Heart right ventricle (tissue), 16 donors: ENCODE measurements at regions of chr14 and their contacts with region 1.

Region 1: GRCh38 chr14:24411443-24412389 is 12.9 kb downstream of the NYNRIN start:
- DNase-seq: no peak
- ATAC-seq: peak in 4 of 8 donors; percentile 23 to 45 (median 34)
- H3K4me3 ChIP-seq: no peak overlapping the region
- H3K27ac ChIP-seq: no peak overlapping the region
- H3K4me1 ChIP-seq: peaks cover 0 to 9% (median 0%) of the 10 kb centered on the region in 9 donors
- H3K27me3 ChIP-seq: no peaks in the 10 kb centered on the region
- CTCF ChIP-seq: peak; percentile 19 to 74 (median 63)

Region 2: GRCh38 chr14:24271134-24271833 is 140.4 kb before region 1 on chr14 and contains the start of gene RABGGTA:
- intact Hi-C with region 1: no loop called
- DNase-seq: peak; percentile 86 to 87
- ATAC-seq: peak; percentile 95 to 98 (median 96)
- H3K4me3 ChIP-seq: peak within 1 kb of the TSS; percentile 82 to 100 (median 94)
- H3K27ac ChIP-seq: peak within 1 kb of the TSS; percentile 95 to 100 (median 98)
- H3K4me1 ChIP-seq: peaks cover 0 to 55% (median 13%) of the 10 kb centered on the region in 9 donors
- H3K27me3 ChIP-seq: no peaks in the 10 kb centered on the region
- CTCF ChIP-seq: peak; percentile 41 to 92 (median 78)
- total RNA-seq, gene RABGGTA: 17.4 to 30.0 (median 19.6) TPM

Region 3: DNA sequence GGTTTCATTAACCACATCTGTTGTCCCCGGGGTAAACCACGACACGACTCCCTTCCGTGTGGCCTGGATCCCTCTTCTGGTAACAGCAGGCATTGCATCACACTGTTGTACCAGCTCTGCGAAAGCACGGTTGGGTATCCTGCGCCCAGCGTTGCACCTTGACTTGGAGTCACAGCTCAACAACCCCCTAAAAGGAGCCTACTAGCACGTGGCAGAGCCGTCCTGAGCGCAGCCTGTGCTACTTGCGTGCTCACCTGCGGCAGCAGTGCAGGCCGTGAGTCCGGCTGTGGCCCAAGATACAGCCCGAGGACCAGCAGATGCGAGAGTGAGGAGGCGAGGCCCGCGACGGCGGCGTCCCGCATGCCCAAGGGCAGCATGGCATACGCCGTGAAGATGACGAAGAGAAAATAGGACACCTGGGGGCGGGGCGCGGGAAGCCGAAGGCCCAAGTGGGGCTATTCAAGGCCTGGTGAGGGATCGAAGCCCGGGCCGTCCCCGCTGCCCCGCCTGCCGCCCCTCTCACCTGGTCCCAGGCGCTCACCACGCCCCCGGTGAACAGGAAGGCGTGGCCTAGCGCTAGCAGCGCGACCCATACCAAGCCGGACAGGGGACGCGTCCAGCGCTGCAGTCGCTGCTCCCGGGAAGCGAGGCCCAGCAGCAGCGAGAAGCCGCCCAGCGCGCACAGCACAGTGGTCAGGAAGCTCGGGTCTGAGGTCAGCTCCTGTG is 79.3 kb before region 1 on chr14:
- intact Hi-C with region 1: loop called in 1 of 10 experiments (anchors 5 kb)
- DNase-seq: peak; percentile 43 to 68
- ATAC-seq: peak in 7 of 8 donors; percentile 31 to 56 (median 51)
- H3K4me3 ChIP-seq: peak overlapping the region in 9 of 10 donors; percentile 14 to 88 (median 70)
- H3K27ac ChIP-seq: peak overlapping the region in 3 of 10 donors; percentile 15 to 97 (median 90)
- H3K4me1 ChIP-seq: peaks cover 6 to 92% (median 37%) of the 10 kb centered on the region in 9 donors
- H3K27me3 ChIP-seq: peaks cover 0 to 35% (median 24%) of the 10 kb centered on the region in 7 donors
- CTCF ChIP-seq: peak; percentile 43 to 75 (median 68)

Region 4: DNA sequence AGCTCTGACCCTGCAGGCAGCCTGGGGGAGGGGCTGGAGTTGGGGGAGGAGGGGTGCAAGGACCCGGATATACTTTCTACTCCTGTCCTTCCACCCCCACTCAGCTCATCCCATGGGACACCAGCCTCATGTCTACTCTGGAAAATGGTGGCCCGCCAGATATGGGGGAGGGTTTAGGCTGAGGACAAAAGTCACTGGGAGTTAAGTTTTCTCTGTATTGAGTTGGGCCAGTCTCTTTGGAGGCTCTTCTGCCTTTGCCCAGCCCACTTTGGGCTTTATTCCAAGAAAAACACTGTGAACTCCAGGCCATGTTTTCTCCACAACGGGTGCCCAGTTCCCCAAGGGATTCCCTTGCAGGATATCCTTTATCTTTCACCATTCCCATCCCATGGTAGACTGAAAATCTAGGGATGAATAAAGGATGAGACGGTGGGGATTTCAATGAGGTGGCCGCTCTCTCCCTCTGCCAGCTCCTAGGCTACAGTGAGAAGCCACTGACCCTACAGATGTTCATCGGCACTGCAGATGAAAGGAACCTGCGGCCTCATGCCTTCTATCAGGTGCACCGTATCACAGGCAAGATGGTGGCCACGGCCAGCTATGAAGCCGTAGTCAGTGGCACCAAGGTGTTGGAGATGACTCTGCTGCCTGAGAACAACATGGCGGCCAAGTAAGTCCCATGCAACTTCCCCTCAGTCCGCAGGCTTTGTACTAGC is 38.9 kb before region 1 on chr14:
- intact Hi-C with region 1: loop called in 3 of 10 experiments (anchors 5 to 10 kb)
- DNase-seq: peak; percentile 71 to 79
- ATAC-seq: peak; percentile 8 to 43 (median 17)
- H3K4me3 ChIP-seq: no peak overlapping the region
- H3K27ac ChIP-seq: peak overlapping the region in 6 of 10 donors; percentile 34 to 68 (median 44)
- H3K4me1 ChIP-seq: peaks cover 0 to 60% (median 7%) of the 10 kb centered on the region in 9 donors
- H3K27me3 ChIP-seq: peaks cover 0 to 20% (median 3%) of the 10 kb centered on the region in 7 donors
- CTCF ChIP-seq: no peak